Activated CD8-positive, alpha-beta T cell treated with anti-CD3 and anti-CD28 coated beads, Interleukin-2, amount 10 ng/mL, durations not matched to agents 7 days and 5 days (primary cell): ENCODE measurements at regions of chrX and their contacts with region 1.

Region 1: DNA sequence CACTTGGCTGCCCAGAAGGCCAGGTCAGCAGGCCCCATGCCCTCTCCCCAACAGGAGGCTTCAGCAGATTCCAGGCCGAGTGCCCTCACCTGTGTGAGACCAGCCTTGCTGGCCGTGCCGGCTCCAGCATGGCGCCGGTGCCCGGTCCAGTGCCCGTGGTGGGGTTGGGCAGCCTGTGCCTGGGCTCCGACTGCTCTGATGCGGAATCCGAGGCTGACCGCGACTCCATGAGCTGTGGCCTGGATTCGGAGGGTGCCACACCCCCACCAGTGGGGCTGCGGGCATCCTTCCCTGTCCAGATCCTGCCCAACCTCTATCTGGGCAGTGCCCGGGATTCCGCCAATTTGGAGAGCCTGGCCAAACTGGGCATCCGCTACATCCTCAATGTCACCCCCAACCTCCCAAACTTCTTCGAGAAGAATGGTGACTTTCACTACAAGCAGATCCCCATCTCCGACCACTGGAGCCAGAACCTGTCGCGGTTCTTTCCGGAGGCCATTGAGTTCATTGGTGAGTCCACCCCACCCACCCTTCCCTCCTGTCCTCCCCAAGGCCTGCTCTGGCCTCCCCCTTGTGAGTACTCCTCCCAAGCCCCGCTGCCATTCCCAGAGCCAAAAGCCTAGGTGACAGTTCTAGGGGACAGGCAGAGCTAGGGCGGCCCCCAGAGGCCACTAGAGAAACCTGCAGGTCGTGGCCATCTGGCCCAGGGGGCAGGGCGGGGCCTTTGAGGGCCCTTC is 2.3 kb downstream of the DUSP9 start:
- DNase-seq: peak; percentile 44
- ATAC-seq: peak; percentile 72
- H3K4me3 Mint-ChIP-seq: no peak overlapping the region
- H3K27ac Mint-ChIP-seq: no peak overlapping the region
- H3K4me1 Mint-ChIP-seq: no peaks in the 10 kb centered on the region
- H3K27me3 Mint-ChIP-seq: peaks cover 24% of the 10 kb centered on the region

Region 2: GRCh38 chrX:153554519-153555167 is 94.7 kb before region 1 on chrX:
- CTCF ChIA-PET with region 1: interaction called, 16 read pairs
- POLR2A ChIA-PET with region 1: interaction called, 3 read pairs
- DNase-seq: peak; percentile 70
- ATAC-seq: peak; percentile 61
- H3K4me3 Mint-ChIP-seq: no peak overlapping the region
- H3K27ac Mint-ChIP-seq: no peak overlapping the region
- H3K4me1 Mint-ChIP-seq: peaks cover 4% of the 10 kb centered on the region
- H3K27me3 Mint-ChIP-seq: no peaks in the 10 kb centered on the region

Region 3: GRCh38 chrX:153609917-153610428 is 39.4 kb before region 1 on chrX:
- CTCF ChIA-PET with region 1: interaction called, 12 read pairs
- POLR2A ChIA-PET with region 1: interaction called, 3 read pairs
- DNase-seq: peak; percentile 76
- ATAC-seq: peak; percentile 97
- H3K4me3 Mint-ChIP-seq: peak overlapping the region; percentile 51
- H3K27ac Mint-ChIP-seq: no peak overlapping the region
- H3K4me1 Mint-ChIP-seq: peaks cover 10% of the 10 kb centered on the region
- H3K27me3 Mint-ChIP-seq: peaks cover 7% of the 10 kb centered on the region

Region 4: GRCh38 chrX:153662266-153662665 is 12.9 kb after region 1 on chrX:
- CTCF ChIA-PET with region 1: interaction called, 13 read pairs
- POLR2A ChIA-PET with region 1: no interaction called
- DNase-seq: peak; percentile 61
- ATAC-seq: no peak
- H3K4me3 Mint-ChIP-seq: peak overlapping the region; percentile 34
- H3K27ac Mint-ChIP-seq: no peak overlapping the region
- H3K4me1 Mint-ChIP-seq: no peaks in the 10 kb centered on the region
- H3K27me3 Mint-ChIP-seq: peaks cover 26% of the 10 kb centered on the region

Region 5: DNA sequence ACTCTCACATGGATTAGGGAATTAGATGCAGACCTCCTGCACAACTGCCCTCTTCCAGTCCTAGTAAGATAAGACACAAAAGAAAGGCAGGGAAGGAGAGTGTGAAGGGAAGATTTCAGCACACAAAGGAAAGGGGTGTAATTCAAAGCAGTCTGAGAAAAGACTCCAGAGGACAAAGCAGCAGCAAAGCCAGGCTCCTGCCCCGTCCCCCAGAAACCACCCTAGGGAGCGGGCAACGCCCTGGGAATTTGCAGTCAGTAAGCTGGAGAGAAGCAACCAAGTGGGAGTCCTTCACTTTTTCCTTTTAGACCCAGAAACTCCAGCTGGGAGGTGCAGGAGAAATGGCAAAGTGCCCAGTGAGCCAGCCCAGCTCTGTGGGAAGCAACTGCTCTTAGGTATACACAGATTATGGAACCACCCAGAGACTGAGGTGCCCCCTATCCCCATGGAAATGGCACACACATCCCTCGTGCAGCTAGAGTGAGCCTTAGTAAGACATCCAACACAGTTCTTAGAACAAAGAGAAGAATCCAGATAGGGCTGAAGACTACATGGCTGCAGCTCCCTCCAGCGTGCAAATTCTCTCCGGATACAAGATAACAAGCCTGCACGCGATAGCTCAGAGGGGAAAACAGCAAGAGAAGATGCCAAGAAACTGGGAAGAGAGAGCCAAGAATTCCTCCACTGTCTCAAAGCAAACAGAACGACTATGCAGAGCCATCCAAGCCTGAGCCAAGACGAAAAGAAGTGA is 396.9 kb after region 1 on chrX:
- CTCF ChIA-PET with region 1: no interaction called
- POLR2A ChIA-PET with region 1: no interaction called
- DNase-seq: no peak
- ATAC-seq: no peak
- H3K4me3 Mint-ChIP-seq: no peak overlapping the region
- H3K27ac Mint-ChIP-seq: no peak overlapping the region
- H3K4me1 Mint-ChIP-seq: peaks cover 18% of the 10 kb centered on the region
- H3K27me3 Mint-ChIP-seq: no peaks in the 10 kb centered on the region